Heart left ventricle (tissue), 16 donors: ENCODE measurements at regions of chr6 and their contacts with region 1.

Region 1: GRCh38 chr6:28838634-28839442 is 84.9 kb downstream of the TRIM27 start:
- DNase-seq: peak; percentile 70 to 88 (median 82)
- ATAC-seq: peak; percentile 69 to 96 (median 92)
- H3K4me3 ChIP-seq: peak overlapping the region; percentile 41 to 76 (median 63)
- H3K27ac ChIP-seq: peak overlapping the region in 8 of 12 donors; percentile 14 to 81 (median 44)
- H3K4me1 ChIP-seq: peaks cover 0 to 24% (median 12%) of the 10 kb centered on the region in 12 donors
- H3K27me3 ChIP-seq: peaks cover 0 to 66% (median 7%) of the 10 kb centered on the region in 9 donors
- CTCF ChIP-seq: peak; percentile 26 to 67 (median 53)
- POLR2A ChIP-seq: no peak

Region 2: GRCh38 chr6:28683944-28684538 is 154.8 kb before region 1 on chr6:
- intact Hi-C with region 1: loop called in 2 of 10 experiments (anchors 5 kb)
- DNase-seq: no peak
- ATAC-seq: no peak
- H3K4me3 ChIP-seq: peak overlapping the region in 2 of 12 donors; percentile 9 to 16
- H3K27ac ChIP-seq: no peak overlapping the region
- H3K4me1 ChIP-seq: no peaks in the 10 kb centered on the region
- H3K27me3 ChIP-seq: peaks cover 0 to 74% (median 28%) of the 10 kb centered on the region in 9 donors
- CTCF ChIP-seq: peak in 11 of 12 donors; percentile 27 to 54 (median 39)
- POLR2A ChIP-seq: no peak

Region 3: DNA sequence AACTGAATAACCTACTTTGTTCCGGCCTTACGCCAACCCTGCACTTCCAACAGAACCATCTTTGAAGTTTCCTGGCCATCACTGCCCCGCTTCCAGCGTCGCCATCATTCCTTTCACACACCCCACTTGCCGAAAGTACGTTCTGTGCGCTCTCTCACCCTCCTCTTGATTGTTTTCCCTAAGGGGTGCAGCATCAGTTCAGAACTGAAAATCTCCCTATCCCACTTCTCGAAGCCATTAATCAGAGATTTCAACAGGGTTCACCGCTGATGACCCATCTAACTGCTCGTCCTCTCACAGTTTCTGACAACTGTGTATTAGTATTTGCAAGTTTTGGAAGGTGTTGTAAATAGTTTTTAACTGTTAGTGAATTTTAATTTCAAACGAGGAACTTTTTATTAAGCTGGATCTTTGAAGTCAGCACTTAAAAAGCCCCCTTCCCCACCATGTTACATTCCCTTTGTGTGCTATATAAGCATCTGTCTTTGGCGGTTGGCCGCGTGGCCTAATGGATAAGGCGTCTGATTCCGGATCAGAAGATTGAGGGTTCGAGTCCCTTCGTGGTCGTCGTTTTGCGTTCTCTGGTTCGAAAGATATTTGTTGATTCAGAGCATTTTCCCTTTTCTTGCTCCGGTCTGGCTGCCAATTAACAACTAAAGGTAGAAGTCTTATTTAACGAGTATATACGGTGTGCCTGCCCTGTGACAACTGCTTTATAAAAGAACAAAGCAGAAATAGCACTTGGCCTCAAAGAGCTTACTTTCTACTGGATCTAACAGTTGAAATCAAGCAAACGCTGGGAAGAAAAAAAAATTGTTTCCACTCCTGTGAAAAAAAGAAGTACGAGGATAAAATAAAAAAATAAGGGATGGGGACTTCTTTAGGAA is 42.3 kb after region 1 on chr6:
- intact Hi-C with region 1: loop called in 1 of 10 experiments (anchors 5 kb)
- DNase-seq: peak; percentile 46 to 69 (median 65)
- ATAC-seq: peak in 3 of 4 donors; percentile 59 to 78 (median 76)
- H3K4me3 ChIP-seq: peak overlapping the region; percentile 18 to 68 (median 59)
- H3K27ac ChIP-seq: peak overlapping the region in 2 of 12 donors; percentile 24 to 55
- H3K4me1 ChIP-seq: peaks cover 0 to 5% (median 0%) of the 10 kb centered on the region in 12 donors
- H3K27me3 ChIP-seq: peaks cover 0 to 24% (median 7%) of the 10 kb centered on the region in 9 donors
- CTCF ChIP-seq: no peak
- POLR2A ChIP-seq: no peak

Region 4: GRCh38 chr6:28940858-28941680 is 102.2 kb after region 1 on chr6:
- intact Hi-C with region 1: loop called in 6 of 10 experiments (anchors 1 to 10 kb)
- DNase-seq: peak in 4 of 5 donors; percentile 72 to 83 (median 80)
- ATAC-seq: peak; percentile 74 to 92 (median 82)
- H3K4me3 ChIP-seq: peak overlapping the region; percentile 42 to 70 (median 64)
- H3K27ac ChIP-seq: peak overlapping the region; percentile 36 to 85 (median 69)
- H3K4me1 ChIP-seq: peaks cover 0 to 33% (median 8%) of the 10 kb centered on the region in 12 donors
- H3K27me3 ChIP-seq: no peaks in the 10 kb centered on the region
- CTCF ChIP-seq: no peak
- POLR2A ChIP-seq: no peak

Region 5: GRCh38 chr6:29016559-29017427 is 178.0 kb after region 1 on chr6:
- intact Hi-C with region 1: loop called (anchors 1 to 5 kb)
- DNase-seq: peak; percentile 66 to 83 (median 79)
- ATAC-seq: peak; percentile 67 to 97 (median 92)
- H3K4me3 ChIP-seq: peak overlapping the region; percentile 7 to 70 (median 54)
- H3K27ac ChIP-seq: peak overlapping the region in 2 of 12 donors; percentile 26 to 55
- H3K4me1 ChIP-seq: peaks cover 0 to 11% (median 2%) of the 10 kb centered on the region in 12 donors
- H3K27me3 ChIP-seq: peaks cover 3 to 66% (median 37%) of the 10 kb centered on the region in 9 donors
- CTCF ChIP-seq: peak; percentile 75 to 90 (median 80)
- POLR2A ChIP-seq: no peak